CD4-positive, alpha-beta T cell (primary cell): ENCODE measurements at regions of chr2 and their contacts with region 1.

Region 1: DNA sequence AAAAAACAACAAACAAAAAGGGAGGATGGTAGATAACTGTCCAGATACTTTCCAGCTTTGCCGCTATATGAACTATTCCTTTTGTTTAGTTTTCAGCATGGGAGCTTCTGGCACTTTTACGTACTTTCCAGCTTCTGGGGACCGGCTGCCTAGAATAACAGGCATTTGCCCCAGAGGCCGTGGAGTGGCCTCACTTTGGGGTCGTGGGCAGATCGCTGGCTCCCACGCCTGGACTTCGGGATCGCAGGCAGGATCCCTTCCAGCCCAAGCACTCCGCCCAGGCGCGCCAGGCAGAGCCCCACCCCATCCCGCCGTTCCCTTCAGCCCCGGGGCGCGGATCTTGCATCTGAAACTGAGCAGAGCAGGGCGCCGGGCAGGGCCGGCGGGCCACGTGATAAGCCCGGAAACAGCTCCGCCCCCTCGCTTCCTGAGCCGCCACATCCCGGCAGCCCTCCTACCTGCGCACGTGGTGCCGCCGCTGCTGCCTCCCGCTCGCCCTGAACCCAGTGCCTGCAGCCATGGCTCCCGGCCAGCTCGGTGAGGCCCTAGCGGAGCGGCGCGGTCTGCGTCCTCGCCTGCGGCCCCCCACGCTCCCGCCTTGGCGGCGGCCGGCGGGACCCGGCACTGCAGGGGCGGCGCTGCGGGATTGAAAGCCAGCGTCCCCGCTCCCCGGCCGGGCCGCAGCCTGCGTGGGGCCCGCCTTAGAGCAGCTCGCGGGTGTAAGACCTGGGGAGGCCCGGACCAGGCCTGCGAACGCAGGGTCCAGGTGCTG is at the start of gene ATIC:
- DNase-seq: peak; percentile 73 to 93 (median 86)
- ATAC-seq: peak; percentile 96
- H3K4me3 ChIP-seq: peak within 1 kb of the TSS; percentile 76
- H3K4me3 Mint-ChIP-seq: peak within 1 kb of the TSS; percentile 96
- H3K27ac ChIP-seq: peak within 1 kb of the TSS; percentile 21 to 56
- H3K27ac Mint-ChIP-seq: peak within 1 kb of the TSS; percentile 92
- H3K4me1 ChIP-seq: peaks cover 26% of the 10 kb centered on the region
- H3K4me1 Mint-ChIP-seq: peaks cover 38% of the 10 kb centered on the region
- H3K27me3 ChIP-seq: no peaks in the 10 kb centered on the region
- H3K27me3 Mint-ChIP-seq: no peaks in the 10 kb centered on the region
- CTCF ChIP-seq: no peak
- total RNA-seq, gene ATIC: 40.5 to 43.3 TPM

Region 2: GRCh38 chr2:214674273-214674672 is 637.5 kb before region 1 on chr2:
- CTCF ChIA-PET with region 1: no interaction called
- POLR2A ChIA-PET with region 1: no interaction called
- intact Hi-C with region 1: no loop called
- DNase-seq: no peak
- ATAC-seq: no peak
- H3K4me3 ChIP-seq: no peak overlapping the region
- H3K4me3 Mint-ChIP-seq: no peak overlapping the region
- H3K27ac ChIP-seq: no peak overlapping the region
- H3K27ac Mint-ChIP-seq: no peak overlapping the region
- H3K4me1 ChIP-seq: no peaks in the 10 kb centered on the region
- H3K4me1 Mint-ChIP-seq: no peaks in the 10 kb centered on the region
- H3K27me3 ChIP-seq: no peaks in the 10 kb centered on the region
- H3K27me3 Mint-ChIP-seq: no peaks in the 10 kb centered on the region
- CTCF ChIP-seq: no peak

Region 3: DNA sequence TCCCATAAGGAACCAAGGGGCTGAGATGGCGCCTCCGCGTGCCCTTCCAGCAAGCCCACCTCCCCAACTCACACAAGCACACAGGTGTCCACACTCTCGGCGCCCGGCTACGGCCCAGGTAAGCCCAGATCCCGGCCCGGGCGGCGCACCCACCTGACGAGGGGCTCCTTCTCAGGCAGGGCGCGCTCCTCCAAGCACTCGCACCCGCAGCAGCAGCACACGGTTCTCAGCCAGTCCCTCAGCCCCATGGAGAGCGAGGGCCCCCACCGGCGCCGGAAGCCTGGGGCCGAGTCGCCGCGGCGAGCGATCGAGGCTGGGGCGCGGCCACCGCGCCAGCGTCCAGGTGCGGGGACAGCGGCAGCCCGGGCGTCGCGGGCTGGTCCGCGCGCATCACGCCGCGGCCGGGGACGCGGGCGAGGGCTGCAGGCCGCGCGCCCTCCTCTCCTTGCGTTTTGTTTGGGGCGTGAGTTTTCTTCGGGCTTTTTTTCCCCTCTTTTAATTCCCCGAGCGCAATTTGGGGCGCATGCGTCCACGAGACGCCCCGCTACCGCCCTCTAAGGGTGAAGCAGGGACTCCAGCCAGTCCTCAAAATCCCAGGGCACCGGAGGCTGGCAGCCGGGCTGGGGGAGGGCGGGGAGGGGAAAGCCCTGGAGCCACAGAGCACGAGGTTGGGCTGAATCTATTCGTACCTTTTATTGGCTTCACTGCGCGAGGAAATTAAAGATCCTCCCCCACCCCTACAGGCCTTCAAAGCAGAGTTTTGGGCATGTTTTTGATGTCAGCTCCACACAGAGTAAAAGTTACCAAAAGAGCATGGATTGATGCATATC is 701.5 kb after region 1 on chr2 and contains the start of gene MREG:
- CTCF ChIA-PET with region 1: no interaction called
- POLR2A ChIA-PET with region 1: no interaction called
- intact Hi-C with region 1: loop called in 1 of 2 experiments (anchors 5 kb)
- DNase-seq: peak; percentile 66 to 92 (median 78)
- ATAC-seq: peak; percentile 77
- H3K4me3 ChIP-seq: peak within 1 kb of the TSS; percentile 77
- H3K4me3 Mint-ChIP-seq: peak within 1 kb of the TSS; percentile 89
- H3K27ac ChIP-seq: no peak within 1 kb of the TSS
- H3K27ac Mint-ChIP-seq: peak within 1 kb of the TSS; percentile 45
- H3K4me1 ChIP-seq: peaks cover 33% of the 10 kb centered on the region
- H3K4me1 Mint-ChIP-seq: peaks cover 53% of the 10 kb centered on the region
- H3K27me3 ChIP-seq: no peaks in the 10 kb centered on the region
- H3K27me3 Mint-ChIP-seq: no peaks in the 10 kb centered on the region
- CTCF ChIP-seq: peak; percentile 76
- total RNA-seq, gene MREG: 1.8 to 2.8 TPM

Region 4: DNA sequence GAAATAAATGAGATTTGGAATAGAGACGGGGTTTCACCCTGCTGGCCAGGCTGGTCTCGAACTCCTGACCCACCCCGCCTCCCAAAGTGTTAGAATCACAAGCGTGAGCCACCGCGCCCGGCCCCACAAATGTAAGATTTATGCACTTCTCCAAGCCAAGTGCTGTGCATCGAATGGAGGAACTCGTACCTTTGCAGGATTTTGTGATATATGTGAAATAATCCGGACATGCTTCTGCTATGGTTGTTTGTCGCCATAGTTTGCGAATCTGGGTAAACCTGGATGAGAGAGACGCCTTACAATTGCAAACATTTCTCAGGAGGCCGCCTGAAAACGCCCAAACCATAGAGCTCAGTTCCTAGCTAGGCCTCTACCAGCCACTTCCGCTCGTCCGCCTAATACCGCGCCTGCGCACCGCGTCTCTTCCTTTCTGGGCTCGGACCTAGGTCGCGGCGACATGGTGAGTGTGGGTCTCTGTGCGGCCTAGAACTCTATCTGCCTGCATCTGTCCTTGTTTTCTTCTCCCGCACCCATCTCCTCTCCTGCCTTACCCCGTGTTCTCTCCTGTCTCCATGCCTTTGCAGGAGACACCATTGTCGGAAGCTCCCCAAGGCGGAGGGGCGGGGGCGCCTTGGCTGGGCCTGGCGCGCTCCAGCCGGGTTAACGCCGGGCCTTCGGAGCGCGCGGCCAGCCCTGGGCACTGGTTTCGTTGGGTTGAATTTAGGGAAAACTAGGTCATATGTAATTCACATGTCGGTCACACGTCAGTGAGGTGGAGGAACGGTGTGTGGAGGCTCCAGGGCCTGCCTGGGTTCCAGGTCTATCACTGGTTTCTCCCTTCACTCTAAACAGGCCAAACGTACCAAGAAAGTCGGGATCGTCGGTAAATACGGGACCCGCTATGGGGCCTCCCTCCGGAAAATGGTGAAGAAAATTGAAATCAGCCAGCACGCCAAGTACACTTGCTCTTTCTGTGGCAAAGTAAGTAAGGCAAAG is 1186.9 kb after region 1 on chr2 and contains the start of gene RPL37A:
- CTCF ChIA-PET with region 1: no interaction called
- POLR2A ChIA-PET with region 1: interaction called, 5 read pairs
- intact Hi-C with region 1: loop called in 1 of 2 experiments (anchors 5 kb)
- DNase-seq: peak; percentile 79 to 96 (median 86)
- ATAC-seq: peak; percentile 92
- H3K4me3 ChIP-seq: peak within 1 kb of the TSS; percentile 72
- H3K4me3 Mint-ChIP-seq: peak within 1 kb of the TSS; percentile 97
- H3K27ac ChIP-seq: peak within 1 kb of the TSS; percentile 77 to 82
- H3K27ac Mint-ChIP-seq: peak within 1 kb of the TSS; percentile 94
- H3K4me1 ChIP-seq: peaks cover 27% of the 10 kb centered on the region
- H3K4me1 Mint-ChIP-seq: peaks cover 54% of the 10 kb centered on the region
- H3K27me3 ChIP-seq: no peaks in the 10 kb centered on the region
- H3K27me3 Mint-ChIP-seq: no peaks in the 10 kb centered on the region
- CTCF ChIP-seq: no peak
- total RNA-seq, gene RPL37A: 4,138 to 4,142 TPM